ENCODE measurements at regions of chr19 and their contacts with region 1.

Region 1: GRCh38 chr19:1324806-1325567 is 39.3 kb downstream of the EFNA2 start:
- DNase-seq: peak; percentile 66 to 90 (median 72)
- H3K4me3 ChIP-seq: peak overlapping the region; percentile 28
- H3K27ac ChIP-seq: no peak overlapping the region
- H3K4me1 ChIP-seq: peaks cover 5% of the 10 kb centered on the region
- H3K27me3 ChIP-seq: no peaks in the 10 kb centered on the region
- CTCF ChIP-seq: no peak
- EP300 ChIP-seq: no peak
- POLR2A ChIP-seq: no peak

Region 2: GRCh38 chr19:1373534-1374249 is 48.7 kb after region 1 on chr19:
- intact Hi-C with region 1: loop called in 1 of 4 experiments (anchors 10 kb)
- DNase-seq: peak; percentile 88 to 95 (median 92)
- H3K4me3 ChIP-seq: no peak overlapping the region
- H3K27ac ChIP-seq: peak overlapping the region in 1 of 2 donors; percentile 80
- H3K4me1 ChIP-seq: peaks cover 12% of the 10 kb centered on the region
- H3K27me3 ChIP-seq: no peaks in the 10 kb centered on the region
- CTCF ChIP-seq: no peak
- EP300 ChIP-seq: no peak
- POLR2A ChIP-seq: no peak

Region 3: GRCh38 chr19:1445185-1445931 is 120.4 kb after region 1 on chr19:
- intact Hi-C with region 1: no loop called
- DNase-seq: peak; percentile 43 to 80 (median 62)
- H3K4me3 ChIP-seq: peak overlapping the region; percentile 10
- H3K27ac ChIP-seq: no peak overlapping the region
- H3K4me1 ChIP-seq: peaks cover 5% of the 10 kb centered on the region
- H3K27me3 ChIP-seq: peaks cover 3% of the 10 kb centered on the region
- CTCF ChIP-seq: peak; percentile 83 to 91 (median 85)
- EP300 ChIP-seq: no peak
- POLR2A ChIP-seq: no peak